ENCODE measurements at regions of chrX and their contacts with region 1.

Region 1: DNA sequence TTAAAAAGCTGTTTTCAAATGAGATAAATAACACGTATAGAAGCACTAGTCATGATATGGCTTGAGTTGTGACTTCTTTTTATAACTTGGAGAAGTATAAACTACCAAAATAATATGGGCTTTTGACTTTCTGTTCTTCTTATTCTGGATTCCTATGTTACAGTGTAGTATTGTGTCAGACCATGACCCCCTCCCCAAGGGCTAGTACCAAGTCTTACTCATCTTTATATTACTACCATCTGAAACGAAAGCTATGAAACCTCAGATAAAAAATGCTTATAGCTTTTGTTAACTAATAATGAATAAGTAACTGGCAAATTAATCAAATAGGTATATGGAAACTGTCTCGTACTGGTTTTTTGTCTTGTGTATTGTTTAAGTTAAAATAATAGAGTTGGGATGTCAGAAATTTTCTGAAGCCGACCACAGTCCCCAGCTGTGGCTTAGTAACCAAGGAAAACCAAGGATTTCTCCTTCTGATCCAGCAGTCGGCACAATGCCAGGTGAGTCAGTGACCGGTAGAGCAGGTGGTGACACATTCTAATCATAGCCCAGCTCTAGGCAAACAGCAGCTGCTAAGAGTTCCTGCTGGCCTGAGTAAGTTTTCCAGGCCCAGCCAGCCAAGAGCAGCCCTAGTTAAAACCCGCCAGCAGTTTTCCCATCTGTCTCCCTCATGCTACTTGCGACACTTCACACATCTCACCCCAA is 163.3 kb upstream of the PRDX4 start:
- DNase-seq: peak; percentile 30 to 88
- H3K4me3 ChIP-seq: no peak overlapping the region
- H3K27ac ChIP-seq: peak overlapping the region in 1 of 2 donors; percentile 45
- H3K4me1 ChIP-seq: peaks cover 0 to 3% of the 10 kb centered on the region in 2 donors
- H3K27me3 ChIP-seq: no peaks in the 10 kb centered on the region
- CTCF ChIP-seq: no peak

Region 2: GRCh38 chrX:23376581-23376980 is 127.4 kb before region 1 on chrX:
- intact Hi-C with region 1: loop called (anchors 5 kb)
- DNase-seq: no peak
- H3K4me3 ChIP-seq: no peak overlapping the region
- H3K27ac ChIP-seq: no peak overlapping the region
- H3K4me1 ChIP-seq: no peaks in the 10 kb centered on the region
- H3K27me3 ChIP-seq: no peaks in the 10 kb centered on the region
- CTCF ChIP-seq: no peak

Region 3: GRCh38 chrX:23434356-23434884 is 69.6 kb before region 1 on chrX:
- intact Hi-C with region 1: loop called (anchors 5 kb)
- DNase-seq: peak; percentile 60 to 90
- H3K4me3 ChIP-seq: peak overlapping the region in 1 of 2 donors; percentile 11
- H3K27ac ChIP-seq: peak overlapping the region; percentile 69 to 79
- H3K4me1 ChIP-seq: no peaks in the 10 kb centered on the region
- H3K27me3 ChIP-seq: no peaks in the 10 kb centered on the region
- CTCF ChIP-seq: no peak

Measured in ascending aorta (tissue), 2 donors.